H1 (cell line): ENCODE measurements at regions of chr11 and their contacts with region 1.

Region 1: DNA sequence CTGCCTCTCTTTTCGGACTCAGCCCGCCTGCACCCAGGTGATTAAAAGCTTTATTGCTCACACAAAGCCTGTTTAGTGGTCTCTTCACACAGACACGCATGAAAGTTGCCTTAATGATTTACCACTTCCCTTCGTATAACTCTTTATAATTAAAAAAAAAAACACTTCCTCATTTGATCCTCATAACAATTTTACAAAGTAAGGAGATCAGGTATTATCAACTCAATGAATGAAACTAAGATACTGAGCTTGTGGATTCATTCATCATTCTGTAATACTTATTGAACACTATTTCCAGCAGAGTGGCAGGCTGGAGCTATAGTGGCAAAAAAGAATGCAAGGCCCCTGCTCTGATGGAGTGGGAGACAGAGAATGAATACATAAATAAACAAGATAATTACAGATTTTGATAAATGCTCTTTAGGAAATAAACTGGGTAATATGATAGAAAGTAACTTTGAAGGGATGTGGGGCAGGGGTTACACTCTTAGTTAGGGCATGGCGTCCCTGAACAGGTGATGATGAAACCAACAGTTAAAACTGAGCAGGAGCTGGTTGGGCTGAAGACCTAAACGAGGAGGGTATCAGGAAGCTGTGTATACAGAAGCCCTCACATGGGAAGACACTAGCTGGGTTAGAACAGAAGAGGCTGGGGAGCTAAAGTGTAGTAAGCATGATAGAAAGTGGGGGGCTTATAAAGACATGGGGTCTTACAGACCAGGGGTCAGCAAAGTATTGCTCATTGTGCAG is 5.4 kb upstream of the CRTAM start:
- DNase-seq: no peak
- H3K4me3 ChIP-seq: no peak overlapping the region
- H3K27ac ChIP-seq: no peak overlapping the region
- H3K4me1 ChIP-seq: peaks cover 0 to 9% (median under 1%) of the 10 kb centered on the region in 4 experiments; a peak in 1 of 7 replicates
- H3K27me3 ChIP-seq: no peaks in the 10 kb centered on the region
- CTCF ChIP-seq: no peak
- EP300 ChIP-seq: no peak
- POLR2A ChIP-seq: no peak
- RAD21 ChIP-seq: no peak

Region 2: GRCh38 chr11:122717264-122717867 is 115.5 kb before region 1 on chr11:
- CTCF ChIA-PET with region 1: no interaction called
- POLR2A ChIA-PET with region 1: no interaction called
- DNase-seq: no peak
- H3K4me3 ChIP-seq: no peak overlapping the region
- H3K27ac ChIP-seq: no peak overlapping the region
- H3K4me1 ChIP-seq: no peaks in the 10 kb centered on the region
- H3K27me3 ChIP-seq: no peaks in the 10 kb centered on the region
- CTCF ChIP-seq: no peak
- EP300 ChIP-seq: no peak
- POLR2A ChIP-seq: no peak
- RAD21 ChIP-seq: no peak

Region 3: DNA sequence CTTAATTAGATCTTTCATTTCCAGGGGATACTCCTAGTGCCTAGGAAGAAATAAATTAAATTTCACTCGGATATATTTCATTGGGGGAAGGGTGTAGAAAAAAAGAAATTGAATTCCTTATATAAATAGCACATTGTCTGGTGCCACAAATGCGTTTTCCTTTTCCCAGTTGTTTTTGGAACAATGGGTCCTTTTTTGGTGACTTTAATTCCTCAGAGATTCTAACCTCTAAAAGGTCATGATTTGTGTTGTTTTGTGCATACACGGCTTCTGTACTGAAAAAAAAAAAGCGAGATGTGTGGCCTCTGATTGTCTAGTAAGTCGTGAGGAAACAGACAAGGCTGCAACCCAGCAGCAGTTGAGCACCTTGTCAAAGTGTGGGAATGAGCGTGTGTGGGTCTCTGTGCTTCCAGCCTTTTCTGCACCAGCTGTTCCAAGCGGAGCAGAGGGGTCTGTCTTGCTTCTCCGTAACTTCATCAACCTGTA is 59.1 kb before region 1 on chr11:
- CTCF ChIA-PET with region 1: no interaction called
- POLR2A ChIA-PET with region 1: no interaction called
- DNase-seq: no peak
- H3K4me3 ChIP-seq: no peak overlapping the region
- H3K27ac ChIP-seq: no peak overlapping the region
- H3K4me1 ChIP-seq: no peaks in the 10 kb centered on the region; a peak in 1 of 7 replicates
- H3K27me3 ChIP-seq: no peaks in the 10 kb centered on the region
- CTCF ChIP-seq: no peak
- EP300 ChIP-seq: no peak
- POLR2A ChIP-seq: no peak
- RAD21 ChIP-seq: no peak

Region 4: GRCh38 chr11:122814401-122814800 is 18.5 kb before region 1 on chr11:
- CTCF ChIA-PET with region 1: interaction called, 11 read pairs
- POLR2A ChIA-PET with region 1: interaction called, 10 read pairs
- DNase-seq: no peak
- H3K4me3 ChIP-seq: no peak overlapping the region
- H3K27ac ChIP-seq: no peak overlapping the region
- H3K4me1 ChIP-seq: peaks cover 0 to 10% (median 7%) of the 10 kb centered on the region in 4 experiments; a peak in 5 of 7 replicates
- H3K27me3 ChIP-seq: no peaks in the 10 kb centered on the region
- CTCF ChIP-seq: peak; percentile 30 to 47 (median 36)
- EP300 ChIP-seq: no peak
- POLR2A ChIP-seq: no peak
- RAD21 ChIP-seq: peak; percentile 42 to 59

Region 5: DNA sequence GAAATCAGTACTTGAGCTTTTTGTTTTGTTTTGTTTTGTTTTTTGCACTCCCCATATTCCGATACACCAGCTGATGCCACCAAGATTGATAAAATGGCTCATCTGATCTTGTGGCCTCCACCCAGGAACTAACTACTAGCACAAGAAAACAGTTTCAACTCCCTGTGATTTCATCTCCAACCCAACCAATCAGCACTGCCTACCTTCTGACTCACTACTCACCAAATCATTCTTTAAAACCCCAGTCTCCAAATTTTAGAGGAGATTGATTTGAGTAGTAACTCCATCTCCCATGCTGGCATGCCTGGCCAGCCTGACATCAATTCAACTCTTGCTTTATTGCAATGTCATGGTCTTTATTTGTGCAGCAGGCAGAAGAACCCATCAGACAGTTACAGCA is 10.7 kb before region 1 on chr11:
- CTCF ChIA-PET with region 1: interaction called, 10 read pairs
- POLR2A ChIA-PET with region 1: interaction called, 5 read pairs
- DNase-seq: no peak
- H3K4me3 ChIP-seq: no peak overlapping the region
- H3K27ac ChIP-seq: no peak overlapping the region
- H3K4me1 ChIP-seq: no peaks in the 10 kb centered on the region
- H3K27me3 ChIP-seq: no peaks in the 10 kb centered on the region
- CTCF ChIP-seq: no peak
- EP300 ChIP-seq: no peak
- POLR2A ChIP-seq: no peak
- RAD21 ChIP-seq: no peak

Region 6: GRCh38 chr11:122976734-122977469 is 144.0 kb after region 1 on chr11:
- CTCF ChIA-PET with region 1: no interaction called
- POLR2A ChIA-PET with region 1: no interaction called
- DNase-seq: peak in 1 of 2 experiments; percentile 84
- H3K4me3 ChIP-seq: peak overlapping the region; percentile 45 to 60 (median 56)
- H3K27ac ChIP-seq: no peak overlapping the region
- H3K4me1 ChIP-seq: peaks cover 0 to 19% (median 11%) of the 10 kb centered on the region in 4 experiments; a peak in 6 of 7 replicates
- H3K27me3 ChIP-seq: peaks cover 70 to 95% (median 85%) of the 10 kb centered on the region in 4 experiments
- CTCF ChIP-seq: no peak
- EP300 ChIP-seq: no peak
- POLR2A ChIP-seq: 0 out of 3 replicates have a peak, but pooled peaks of 1 of the 2 experiments have one; percentile 27
- RAD21 ChIP-seq: no peak